CD14-positive monocyte (primary cell): ENCODE measurements at regions of chr13 and their contacts with region 1.

Region 1: GRCh38 chr13:33817901-33818706 is at the start of gene RFC3:
- DNase-seq: peak; percentile 83 to 93 (median 90)
- H3K4me3 ChIP-seq: peak within 1 kb of the TSS; percentile 71 to 95 (median 92)
- H3K4me3 Mint-ChIP-seq: peak within 1 kb of the TSS; percentile 95 to 98
- H3K27ac ChIP-seq: peak within 1 kb of the TSS; percentile 58 to 82
- H3K27ac Mint-ChIP-seq: peak within 1 kb of the TSS; percentile 88 to 95 (median 89)
- H3K4me1 ChIP-seq: peaks cover 12 to 15% of the 10 kb centered on the region in 2 donors
- H3K4me1 Mint-ChIP-seq: peaks cover 10% of the 10 kb centered on the region
- H3K27me3 ChIP-seq: peaks cover 0 to 7% of the 10 kb centered on the region in 2 donors
- H3K27me3 Mint-ChIP-seq: peaks cover 4 to 9% (median 5%) of the 10 kb centered on the region in 3 donors
- CTCF ChIP-seq: no peak
- polyA plus RNA-seq, gene RFC3: 2.5 to 5.3 (median 4.1) TPM

Region 2: DNA sequence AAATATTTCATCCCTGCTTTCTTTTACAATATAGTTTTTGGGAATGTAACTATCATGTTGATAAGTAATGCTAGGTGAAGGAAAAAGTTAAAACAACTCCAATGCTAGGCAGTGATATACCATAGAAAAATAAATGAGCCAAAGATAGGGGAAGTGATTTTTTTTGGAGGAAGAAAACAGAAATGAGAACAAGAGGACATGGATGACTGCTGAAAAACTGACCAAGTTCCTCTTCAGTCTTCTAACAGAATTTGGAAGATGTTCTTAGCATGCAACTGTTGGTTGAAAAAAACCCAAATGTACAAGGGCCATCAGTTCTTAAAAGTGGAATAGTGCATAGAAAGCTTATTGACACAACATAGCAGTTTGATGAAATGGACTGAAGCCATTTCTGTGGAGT is 270.0 kb before region 1 on chr13:
- intact Hi-C with region 1: loop called (anchors 5 to 10 kb)
- DNase-seq: peak; percentile 46 to 59 (median 48)
- H3K4me3 ChIP-seq: peak overlapping the region in 1 of 3 experiments; percentile 31
- H3K4me3 Mint-ChIP-seq: peak overlapping the region in 1 of 2 donors; percentile 48
- H3K27ac ChIP-seq: peak overlapping the region in 1 of 2 donors; percentile 72
- H3K27ac Mint-ChIP-seq: peak overlapping the region in 6 of 7 donors; percentile 25 to 78 (median 72)
- H3K4me1 ChIP-seq: peaks cover 21 to 33% of the 10 kb centered on the region in 2 donors
- H3K4me1 Mint-ChIP-seq: peaks cover 22% of the 10 kb centered on the region
- H3K27me3 ChIP-seq: no peaks in the 10 kb centered on the region
- H3K27me3 Mint-ChIP-seq: no peaks in the 10 kb centered on the region
- CTCF ChIP-seq: no peak